Cardiac septum (tissue), 1 donor: ENCODE measurements at regions of chr4 and their contacts with region 1.

Region 1: DNA sequence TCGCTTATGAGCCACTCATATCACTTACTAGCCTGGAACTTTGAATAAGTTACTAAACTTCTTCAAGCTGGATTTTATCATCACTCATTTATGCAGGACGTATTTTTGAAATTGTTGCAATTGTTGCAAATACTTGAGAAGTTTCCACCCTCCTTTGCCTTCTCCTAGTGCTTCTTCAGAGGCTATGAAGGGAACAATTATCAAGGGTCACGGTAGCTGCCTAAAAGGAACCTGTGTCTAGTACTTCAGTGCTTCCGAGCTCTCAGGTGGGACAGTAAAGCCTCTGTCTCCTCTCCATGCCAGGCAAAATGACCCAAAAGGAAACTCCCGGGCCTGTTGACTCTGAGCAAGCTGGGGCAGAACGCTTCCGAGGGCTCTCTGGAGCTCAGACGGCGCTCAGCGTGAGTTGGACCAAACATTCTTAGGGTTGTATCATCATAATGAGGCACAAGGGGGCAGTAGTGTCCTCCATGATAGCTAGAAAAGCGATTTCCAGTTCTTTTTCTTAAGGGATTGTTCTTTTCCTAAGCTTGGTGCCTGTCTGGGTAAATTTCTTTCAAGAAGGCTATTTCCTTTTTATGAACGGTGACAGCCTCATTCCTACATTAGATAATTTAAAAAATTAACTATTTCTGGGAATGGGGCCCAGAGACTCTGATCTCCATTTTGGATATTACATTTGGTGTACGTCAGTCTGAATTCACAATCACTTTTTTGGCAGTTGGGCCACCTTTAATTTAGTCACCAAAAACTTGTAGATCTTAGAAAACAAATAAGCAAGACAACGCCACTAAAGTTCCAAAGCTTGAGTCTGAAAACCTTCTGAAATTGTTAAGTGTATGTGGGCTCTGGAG is 73.1 kb downstream of the PACRGL start:
- DNase-seq: no peak

Region 2: GRCh38 chr4:20592663-20593062 is 180.7 kb before region 1 on chr4:
- intact Hi-C with region 1: no loop called
- DNase-seq: no peak

Region 3: DNA sequence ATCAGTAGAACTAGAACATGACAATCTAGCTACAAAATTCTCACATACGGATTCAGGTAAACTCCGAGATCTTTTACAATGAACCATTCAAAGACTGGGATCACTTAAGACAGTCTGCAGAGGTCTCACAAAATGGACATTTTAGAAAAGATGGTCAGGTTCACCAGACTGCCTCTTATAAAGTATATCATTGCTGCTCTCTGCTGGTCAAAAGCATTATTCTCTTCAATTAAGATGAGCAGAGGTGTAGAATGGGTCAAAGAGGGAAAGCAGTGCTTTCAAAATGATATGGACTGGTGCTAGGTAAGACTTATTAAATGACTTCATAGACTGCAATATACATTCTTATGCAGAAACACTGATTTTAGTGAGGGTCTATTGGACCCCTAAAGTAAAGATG is 361.6 kb after region 1 on chr4:
- intact Hi-C with region 1: loop called (anchors 10 kb)
- DNase-seq: no peak